K562 (cell line): ENCODE measurements at regions of chr7 and their contacts with region 1.

Region 1: GRCh38 chr7:123204206-123204835 is 4.6 kb upstream of the SLC13A1 start:
- DNase-seq: no peak
- ATAC-seq: no peak
- H3K4me3 ChIP-seq: no peak overlapping the region
- H3K27ac ChIP-seq: no peak overlapping the region
- H3K4me1 ChIP-seq: no peaks in the 10 kb centered on the region
- H3K27me3 ChIP-seq: no peaks in the 10 kb centered on the region
- CTCF ChIP-seq: no peak
- EP300 ChIP-seq: no peak
- POLR2A ChIP-seq: no peak
- RAD21 ChIP-seq: no peak

Region 2: GRCh38 chr7:123220396-123220795 is 16.1 kb after region 1 on chr7:
- CTCF ChIA-PET with region 1: no interaction called
- POLR2A ChIA-PET with region 1: no interaction called
- in situ Hi-C with region 1: no loop called
- intact Hi-C with region 1: loop called (anchors 1 kb)
- DNase-seq: no peak
- ATAC-seq: no peak
- H3K4me3 ChIP-seq: no peak overlapping the region
- H3K27ac ChIP-seq: no peak overlapping the region
- H3K4me1 ChIP-seq: no peaks in the 10 kb centered on the region
- H3K27me3 ChIP-seq: no peaks in the 10 kb centered on the region
- CTCF ChIP-seq: no peak
- EP300 ChIP-seq: no peak
- POLR2A ChIP-seq: no peak
- RAD21 ChIP-seq: no peak